RWPE1 (cell line): ENCODE measurements at regions of chr19 and their contacts with region 1.

Region 1: GRCh38 chr19:47273978-47274890 is at the start of gene INAFM1:
- DNase-seq: peak; percentile 88
- H3K27ac ChIP-seq: peak within 1 kb of the TSS; percentile 99
- CTCF ChIP-seq: no peak

Region 2: DNA sequence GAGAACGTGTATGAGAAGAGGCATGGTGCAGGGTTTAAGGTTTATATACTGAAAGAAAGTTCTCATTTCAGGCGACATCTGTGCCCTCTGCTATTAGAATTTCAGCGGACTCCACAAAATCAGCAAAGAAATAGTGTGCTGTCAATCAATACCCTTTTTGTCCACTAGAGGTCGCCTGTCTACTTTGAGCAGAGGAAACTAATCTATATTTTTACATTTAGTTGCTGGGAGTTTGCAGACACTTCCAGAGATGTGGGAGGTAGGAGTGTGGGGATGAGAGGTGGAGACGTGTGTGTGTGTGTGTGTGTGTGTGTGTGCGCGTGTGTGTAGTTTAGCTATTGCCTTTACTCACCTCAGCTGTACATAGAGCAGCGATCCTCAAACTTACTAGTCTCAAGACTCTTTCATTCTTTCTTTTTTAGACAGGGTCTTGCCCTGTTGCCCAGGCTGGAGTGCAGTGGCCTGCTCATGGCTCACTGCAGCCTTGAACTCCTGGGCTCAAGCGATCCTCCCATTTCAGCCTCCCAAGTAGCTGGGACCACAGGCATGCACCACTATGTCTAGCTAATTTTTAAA is 10.2 kb after region 1 on chr19:
- CTCF ChIA-PET with region 1: interaction called, 11 read pairs
- POLR2A ChIA-PET with region 1: interaction called, 3 read pairs
- DNase-seq: peak; percentile 17
- H3K27ac ChIP-seq: no peak overlapping the region
- CTCF ChIP-seq: peak; percentile 91

Region 3: GRCh38 chr19:47600246-47601179 is 326.3 kb after region 1 on chr19:
- CTCF ChIA-PET with region 1: no interaction called
- POLR2A ChIA-PET with region 1: no interaction called
- DNase-seq: peak; percentile 99
- H3K27ac ChIP-seq: peak overlapping the region; percentile 90
- CTCF ChIP-seq: no peak